AG04449 (cell line): ENCODE measurements at regions of chr3 and their contacts with region 1.

Region 1: GRCh38 chr3:197224034-197224444 is 74.4 kb downstream of the DLG1 start:
- DNase-seq: peak; percentile 17
- H3K4me3 ChIP-seq: no peak overlapping the region
- CTCF ChIP-seq: peak; percentile 34

Region 2: DNA sequence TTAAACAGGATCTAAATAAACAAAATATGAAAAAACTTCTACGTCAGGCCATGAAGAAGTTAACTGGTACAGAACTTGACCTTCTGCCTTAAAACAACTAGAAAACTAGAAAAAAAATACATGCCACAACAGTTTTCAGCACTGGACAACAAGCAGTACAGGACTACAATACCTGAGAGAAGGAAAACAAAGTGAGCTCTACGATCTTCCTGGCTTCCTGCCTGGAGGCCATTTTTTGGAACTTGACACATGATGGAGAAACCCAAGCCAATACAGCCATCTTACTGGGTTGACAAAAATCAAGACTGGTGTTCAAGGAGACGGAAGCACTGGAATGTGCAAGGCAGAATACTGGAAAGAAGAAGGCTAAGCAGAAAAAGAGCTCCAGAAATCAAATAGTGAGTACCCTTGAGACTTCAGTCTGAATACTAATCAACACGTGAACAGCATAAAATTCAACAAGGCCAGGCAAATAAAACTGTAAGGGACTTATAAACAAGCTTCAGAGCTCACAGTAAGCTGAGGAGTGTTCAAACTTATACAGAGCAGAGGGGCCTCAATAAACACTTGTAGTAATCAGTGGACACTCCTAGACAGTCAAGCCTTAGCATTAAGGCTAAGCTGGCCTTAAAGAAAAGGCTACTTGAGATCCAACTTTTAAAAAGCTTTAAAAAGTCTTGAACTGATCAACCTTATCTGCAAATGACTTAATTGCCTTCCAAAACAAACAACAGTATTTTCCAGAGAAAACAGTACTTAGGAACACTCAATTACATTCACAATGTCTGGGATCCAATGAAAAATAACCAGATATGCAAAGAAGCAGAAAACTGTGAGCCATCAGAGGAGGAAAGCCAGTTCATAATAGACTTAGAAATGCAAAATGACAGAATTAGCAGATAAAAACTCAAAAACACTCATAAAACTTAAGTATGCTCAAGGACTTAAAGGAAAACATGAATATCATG is 11.2 kb after region 1 on chr3:
- CTCF ChIA-PET with region 1: interaction called, 13 read pairs
- POLR2A ChIA-PET with region 1: no interaction called
- DNase-seq: no peak
- H3K4me3 ChIP-seq: no peak overlapping the region
- CTCF ChIP-seq: no peak

Region 3: GRCh38 chr3:197501879-197502620 is 278.0 kb after region 1 on chr3:
- CTCF ChIA-PET with region 1: interaction called, 13 read pairs
- POLR2A ChIA-PET with region 1: no interaction called
- DNase-seq: no peak
- H3K4me3 ChIP-seq: no peak overlapping the region
- CTCF ChIP-seq: peak; percentile 52